PC-9 (cell line): ENCODE measurements at regions of chr20 and their contacts with region 1.

Region 1: DNA sequence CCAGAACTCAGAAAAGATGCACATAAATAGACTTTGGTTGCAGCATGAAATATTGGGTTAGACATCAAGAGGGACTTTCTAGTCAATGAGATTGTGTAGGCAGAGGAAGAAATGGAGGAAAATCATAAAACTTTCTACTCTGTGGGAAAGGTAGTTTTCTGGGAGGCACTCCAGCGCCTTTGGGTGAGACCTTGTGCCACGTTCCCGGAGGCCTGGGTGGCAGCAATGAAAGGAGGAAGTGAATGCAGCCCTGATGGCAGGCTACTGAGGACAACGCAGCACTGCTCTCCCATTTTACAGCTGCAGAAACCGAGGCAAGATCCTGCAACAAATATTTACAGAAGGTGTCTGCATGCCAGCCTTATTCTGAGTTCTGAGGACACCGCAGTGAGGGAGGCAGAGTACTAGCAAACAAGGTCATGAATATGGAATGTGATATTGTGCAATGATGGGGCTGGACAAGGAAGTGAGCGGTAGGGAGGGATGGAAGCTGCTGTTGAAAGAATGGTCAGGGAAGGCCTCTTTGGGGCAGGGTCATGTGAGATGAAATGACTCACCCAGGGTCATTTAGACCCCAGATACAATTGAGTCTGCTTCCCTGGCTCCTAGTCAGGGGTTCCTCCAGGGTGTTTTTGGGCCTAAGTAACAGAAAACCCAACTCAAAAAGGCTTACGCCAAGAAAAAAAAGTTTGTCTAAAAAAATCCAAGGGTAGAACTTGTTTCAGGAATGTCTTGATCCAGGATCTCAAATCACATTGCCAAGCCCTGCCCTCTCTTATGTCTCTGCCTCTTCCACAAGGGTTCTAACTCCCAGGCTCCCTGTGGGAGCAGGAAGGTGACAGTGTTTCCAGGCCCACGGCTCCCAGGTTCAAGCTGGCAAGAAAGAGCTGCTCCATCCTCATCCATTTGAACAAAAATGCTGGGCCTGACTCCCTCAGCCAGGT is 159.2 kb downstream of the TFAP2C start:
- DNase-seq: peak; percentile 82 to 99
- H3K4me3 ChIP-seq: peak overlapping the region; percentile 12; the same call in 1 of the 2 replicates
- H3K27ac ChIP-seq: peak overlapping the region; percentile 96
- H3K4me1 ChIP-seq: peaks cover 46% of the 10 kb centered on the region
- H3K27me3 ChIP-seq: no peaks in the 10 kb centered on the region
- CTCF ChIP-seq: no peak

Region 2: DNA sequence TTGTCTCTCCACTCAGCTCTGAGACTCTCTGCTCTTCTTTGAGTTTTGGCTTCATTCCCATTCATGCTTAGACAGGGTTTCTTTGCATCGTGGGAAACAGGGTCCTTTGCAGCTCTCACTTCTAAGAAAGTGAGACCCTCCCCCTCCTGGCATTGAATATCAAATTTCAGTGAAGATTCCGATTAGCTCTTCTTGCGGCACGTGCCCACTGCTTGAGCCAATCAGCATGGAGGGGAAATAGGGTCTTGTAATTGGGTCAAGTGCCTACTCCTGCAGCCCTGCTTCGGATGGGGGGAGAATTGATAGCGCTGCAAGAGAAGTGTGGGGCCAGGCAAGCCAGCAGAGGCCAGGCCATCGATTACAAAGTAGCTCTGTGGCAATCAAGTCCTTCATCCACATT is 89.6 kb before region 1 on chr20:
- CTCF ChIA-PET with region 1: no interaction called
- POLR2A ChIA-PET with region 1: no interaction called
- intact Hi-C with region 1: no loop called
- DNase-seq: no peak
- H3K4me3 ChIP-seq: no peak overlapping the region
- H3K27ac ChIP-seq: no peak overlapping the region
- H3K4me1 ChIP-seq: no peaks in the 10 kb centered on the region
- H3K27me3 ChIP-seq: no peaks in the 10 kb centered on the region
- CTCF ChIP-seq: no peak

Region 3: DNA sequence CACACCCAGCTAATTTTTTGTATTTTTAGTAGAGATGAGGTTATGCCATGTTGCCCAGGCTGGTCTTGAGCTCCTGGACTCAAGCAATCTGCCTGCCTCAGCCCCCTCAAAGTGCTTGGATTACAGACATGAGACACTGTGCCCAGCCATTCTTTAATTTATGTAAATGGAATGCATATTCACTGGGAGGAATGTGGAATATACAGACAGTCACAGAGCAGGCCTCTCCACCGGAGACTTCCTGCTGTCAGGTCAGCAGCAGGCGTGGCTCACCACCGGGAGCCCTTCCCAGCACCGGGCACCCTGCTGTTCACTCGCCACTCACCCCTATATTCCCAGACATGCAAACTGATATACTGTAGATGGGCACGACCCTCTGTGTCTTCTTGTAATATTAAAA is 76.2 kb before region 1 on chr20:
- CTCF ChIA-PET with region 1: no interaction called
- POLR2A ChIA-PET with region 1: interaction called, 5 read pairs
- intact Hi-C with region 1: loop called (anchors 2 kb)
- DNase-seq: peak; percentile 73 to 88
- H3K4me3 ChIP-seq: no peak overlapping the region
- H3K27ac ChIP-seq: peak overlapping the region; percentile 64
- H3K4me1 ChIP-seq: peaks cover 20% of the 10 kb centered on the region
- H3K27me3 ChIP-seq: no peaks in the 10 kb centered on the region
- CTCF ChIP-seq: no peak